ENCODE measurements at regions of chr14 and their contacts with region 1.

Region 1: DNA sequence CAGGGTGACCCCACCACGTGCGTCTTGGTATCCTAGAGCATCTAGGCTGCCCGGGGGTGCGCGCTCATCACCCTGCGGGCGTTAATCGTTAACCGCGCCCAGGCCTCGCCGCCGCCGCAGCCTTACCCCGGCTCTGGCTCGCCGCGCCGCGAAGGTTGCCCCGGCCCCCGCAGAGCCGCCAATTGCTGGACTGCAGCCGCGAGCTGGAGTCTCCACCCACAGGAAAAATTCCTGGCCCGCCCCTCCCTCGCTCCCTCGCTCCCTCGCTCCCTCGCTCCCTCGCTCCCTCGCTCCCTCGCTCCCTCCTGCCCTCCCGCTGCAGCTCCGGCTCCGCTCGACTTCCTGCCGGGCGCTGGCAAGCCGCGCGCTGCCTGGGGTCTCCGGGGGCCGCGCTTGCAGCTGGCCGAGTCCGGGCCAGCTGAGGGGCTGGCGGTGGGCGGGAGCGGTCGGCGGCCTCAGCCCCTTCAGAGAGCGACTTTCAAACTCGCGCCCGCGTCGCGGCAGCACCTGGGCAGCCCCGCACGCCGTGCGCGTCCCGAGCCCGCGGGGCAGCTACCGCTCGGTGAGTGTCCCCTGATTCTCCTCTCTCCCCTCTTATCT is at the start of gene PLEKHG3:
- DNase-seq: peak; percentile 63
- H3K4me3 Mint-ChIP-seq: peak within 1 kb of the TSS; percentile 86
- H3K27ac Mint-ChIP-seq: peak within 1 kb of the TSS; percentile 84
- H3K4me1 Mint-ChIP-seq: peaks cover 80% of the 10 kb centered on the region
- H3K27me3 Mint-ChIP-seq: peaks cover 13% of the 10 kb centered on the region
- total RNA-seq, gene PLEKHG3: 126 to 133 TPM

Region 2: DNA sequence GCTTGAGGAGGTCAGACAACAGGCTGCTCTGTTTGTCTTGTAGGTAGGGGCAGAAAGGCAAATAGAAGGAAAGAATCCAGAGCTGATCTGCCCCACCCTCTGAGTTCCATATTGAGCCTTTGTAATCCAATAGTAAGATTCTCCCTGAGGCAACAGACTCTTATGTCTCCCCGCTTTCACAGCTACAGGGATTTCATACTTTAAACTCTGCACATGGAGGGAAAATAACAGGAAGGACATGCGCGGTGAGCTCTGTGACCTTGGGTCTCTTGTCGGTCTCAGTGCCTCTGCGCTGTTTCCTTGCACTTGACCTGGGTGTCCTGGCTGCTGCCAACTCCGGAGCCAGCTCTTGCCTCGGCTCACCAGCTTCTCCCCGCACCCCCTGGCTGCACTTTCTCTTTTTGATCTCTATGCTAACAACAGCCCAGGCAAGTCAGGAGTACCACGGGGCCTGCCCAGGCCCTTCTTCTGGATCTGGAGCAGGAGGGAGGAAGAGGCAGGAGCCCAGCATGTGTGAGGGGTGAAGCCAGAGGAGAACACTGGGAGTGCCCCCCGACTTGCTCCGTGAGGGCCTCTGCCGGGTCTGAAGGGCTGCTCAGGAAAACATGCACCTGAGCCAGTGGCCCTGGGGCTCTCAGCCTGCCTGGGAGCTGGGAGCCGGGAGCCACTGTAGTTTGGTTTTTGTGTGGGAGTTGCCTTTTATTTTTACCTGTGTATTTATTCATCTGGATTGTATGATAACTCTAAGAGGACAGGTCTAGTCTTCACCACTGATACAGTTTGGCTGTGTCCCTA is 78.6 kb before region 1 on chr14:
- CTCF ChIA-PET with region 1: no interaction called
- POLR2A ChIA-PET with region 1: no interaction called
- DNase-seq: no peak
- H3K4me3 Mint-ChIP-seq: no peak overlapping the region
- H3K27ac Mint-ChIP-seq: no peak overlapping the region
- H3K4me1 Mint-ChIP-seq: peaks cover 12% of the 10 kb centered on the region
- H3K27me3 Mint-ChIP-seq: peaks cover 13% of the 10 kb centered on the region

Region 3: DNA sequence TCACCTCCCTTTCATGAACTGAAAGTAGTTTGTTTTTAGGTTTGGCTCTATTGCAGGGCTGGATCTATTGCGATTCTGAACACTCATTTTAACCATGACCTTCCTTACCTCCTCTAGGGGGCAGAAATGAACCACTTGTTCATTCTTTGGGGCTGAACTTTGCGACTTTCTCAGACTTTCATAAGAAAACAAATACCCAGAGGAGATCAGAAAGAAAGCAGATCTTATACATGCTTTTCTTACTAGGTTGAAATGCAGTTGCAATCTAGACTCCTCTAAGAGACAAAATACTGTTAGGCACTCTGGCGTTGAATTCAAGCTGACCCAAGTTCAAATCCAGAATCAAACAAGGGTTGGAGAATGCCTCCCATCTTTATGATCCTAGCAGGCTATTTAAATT is 32.7 kb before region 1 on chr14:
- CTCF ChIA-PET with region 1: interaction called, 23 read pairs
- POLR2A ChIA-PET with region 1: interaction called, 64 read pairs
- DNase-seq: no peak
- H3K4me3 Mint-ChIP-seq: no peak overlapping the region
- H3K27ac Mint-ChIP-seq: peak overlapping the region; percentile 5
- H3K4me1 Mint-ChIP-seq: peaks cover 48% of the 10 kb centered on the region
- H3K27me3 Mint-ChIP-seq: peaks cover 4% of the 10 kb centered on the region

Region 4: DNA sequence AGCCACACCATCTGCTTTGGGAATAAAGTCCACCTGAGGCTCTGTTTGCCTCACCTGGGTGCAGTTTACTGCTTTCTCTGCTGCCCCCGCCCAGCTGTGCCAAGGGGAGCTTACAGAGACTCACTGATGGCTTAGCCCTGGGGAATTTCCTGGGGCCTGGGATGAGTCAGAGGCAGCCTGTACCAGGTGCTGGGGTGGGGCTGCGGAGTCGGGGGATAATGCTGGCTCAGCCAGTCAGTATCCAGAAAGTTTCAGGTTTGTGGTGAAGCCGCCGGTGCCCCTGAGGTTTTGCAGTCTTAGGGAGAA is 22.3 kb after region 1 on chr14:
- CTCF ChIA-PET with region 1: interaction called, 30 read pairs
- POLR2A ChIA-PET with region 1: interaction called, 230 read pairs
- DNase-seq: peak; percentile 59
- H3K4me3 Mint-ChIP-seq: no peak overlapping the region
- H3K27ac Mint-ChIP-seq: peak overlapping the region; percentile 96
- H3K4me1 Mint-ChIP-seq: peaks cover 94% of the 10 kb centered on the region
- H3K27me3 Mint-ChIP-seq: no peaks in the 10 kb centered on the region

Region 5: DNA sequence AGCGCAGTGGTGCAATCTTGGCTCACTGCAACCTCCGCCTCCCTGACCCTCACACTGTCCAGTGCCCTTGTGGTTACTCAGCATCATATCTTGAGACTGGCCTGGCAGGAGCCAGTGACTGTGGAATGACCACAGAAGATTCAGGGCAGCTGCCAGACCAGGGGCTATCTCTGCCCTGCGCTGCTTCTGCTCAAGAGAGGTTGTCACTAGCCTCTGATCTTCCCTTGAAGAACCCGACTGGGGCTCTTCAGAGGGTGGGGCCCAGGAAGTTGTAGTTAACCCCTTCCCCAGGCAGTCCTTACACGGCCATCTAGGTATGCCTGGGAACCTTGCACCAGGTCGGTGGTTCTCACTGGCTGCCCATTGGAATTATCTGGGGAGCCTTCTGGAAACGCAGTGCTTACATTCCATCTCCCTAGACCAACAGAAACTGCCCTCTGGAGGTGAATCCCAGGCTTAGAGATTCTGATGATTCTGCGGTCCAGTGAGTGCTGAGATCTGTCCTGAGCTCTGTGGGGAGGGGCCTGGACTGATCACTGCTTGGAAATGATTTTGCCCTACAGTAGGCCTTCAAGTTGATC is 41.4 kb after region 1 on chr14:
- CTCF ChIA-PET with region 1: interaction called, 5 read pairs
- POLR2A ChIA-PET with region 1: interaction called, 11 read pairs
- DNase-seq: no peak
- H3K4me3 Mint-ChIP-seq: no peak overlapping the region
- H3K27ac Mint-ChIP-seq: peak overlapping the region; percentile 53
- H3K4me1 Mint-ChIP-seq: peaks cover 39% of the 10 kb centered on the region
- H3K27me3 Mint-ChIP-seq: no peaks in the 10 kb centered on the region

Region 6: DNA sequence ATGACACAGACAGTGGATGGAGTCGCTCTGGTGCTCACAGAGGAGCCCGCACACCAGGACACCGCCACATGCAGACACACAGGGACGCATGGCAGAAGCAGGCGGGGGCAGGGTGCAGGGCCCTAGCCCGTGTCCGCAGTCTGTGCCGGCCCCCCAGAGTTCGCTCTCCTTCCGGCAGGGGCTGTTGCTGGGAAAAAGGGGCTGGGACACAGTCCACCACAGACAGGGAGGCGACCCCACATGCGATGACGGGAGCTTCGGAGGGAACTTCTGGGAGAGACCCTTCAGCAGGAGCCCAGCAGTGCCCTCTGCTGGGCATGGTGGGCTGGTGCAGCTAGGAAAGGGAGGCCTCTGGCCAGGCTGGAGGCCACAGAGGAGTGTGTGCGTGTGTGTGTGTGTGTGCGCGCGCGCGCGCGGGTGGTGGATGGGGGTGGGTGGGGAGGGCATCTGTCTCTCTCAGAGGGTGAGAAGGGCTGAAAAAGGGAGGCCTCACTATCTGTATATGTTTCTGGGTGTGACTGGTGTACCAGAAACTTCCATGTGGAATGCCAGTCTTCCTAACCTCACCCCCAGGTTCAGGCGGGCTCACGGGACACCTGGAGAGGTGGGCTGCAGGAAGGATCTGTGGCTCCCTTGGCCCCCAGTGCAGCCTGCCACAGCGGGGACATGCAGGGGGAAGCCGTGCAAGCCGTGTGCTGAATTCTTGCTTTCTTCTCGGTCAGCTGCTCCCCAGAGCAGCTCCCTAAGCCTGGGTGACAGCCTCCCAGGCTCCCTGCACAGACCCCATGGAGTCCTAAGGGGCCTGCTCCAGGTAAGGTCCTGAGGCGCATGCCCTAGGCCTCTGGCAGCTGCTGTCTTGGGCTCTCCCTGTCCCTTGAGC is 60.6 kb after region 1 on chr14:
- CTCF ChIA-PET with region 1: interaction called, 9 read pairs
- POLR2A ChIA-PET with region 1: interaction called, 16 read pairs
- DNase-seq: peak; percentile 75
- H3K4me3 Mint-ChIP-seq: no peak overlapping the region
- H3K27ac Mint-ChIP-seq: no peak overlapping the region
- H3K4me1 Mint-ChIP-seq: peaks cover 65% of the 10 kb centered on the region
- H3K27me3 Mint-ChIP-seq: peaks cover 8% of the 10 kb centered on the region

Region 7: DNA sequence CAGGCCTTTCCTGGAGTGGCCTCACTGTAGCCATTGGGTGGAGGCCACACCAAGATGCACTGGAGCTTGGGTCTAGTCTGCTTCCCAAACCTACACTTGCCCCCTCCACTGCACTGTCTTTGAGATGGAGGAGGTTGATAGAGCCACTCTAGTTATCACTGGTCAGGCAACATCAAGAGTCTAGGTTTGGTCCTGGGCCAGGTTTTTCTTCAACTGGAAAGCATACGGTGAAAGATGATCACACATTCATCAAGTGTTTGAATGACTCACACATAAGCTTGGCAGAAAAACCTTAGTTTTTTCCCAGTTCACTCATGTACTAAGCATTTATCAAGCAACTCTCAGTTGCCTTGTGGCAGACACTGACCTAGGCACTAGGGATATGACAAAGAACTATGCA is 84.4 kb after region 1 on chr14:
- CTCF ChIA-PET with region 1: no interaction called
- POLR2A ChIA-PET with region 1: no interaction called
- DNase-seq: no peak
- H3K4me3 Mint-ChIP-seq: no peak overlapping the region
- H3K27ac Mint-ChIP-seq: no peak overlapping the region
- H3K4me1 Mint-ChIP-seq: no peaks in the 10 kb centered on the region
- H3K27me3 Mint-ChIP-seq: no peaks in the 10 kb centered on the region